ENCODE measurements at regions of chr2 and their contacts with region 1.

Region 1: GRCh38 chr2:233297076-233297475 is 10.5 kb upstream of the SAG start:
- DNase-seq: no peak
- H3K4me3 ChIP-seq: no peak overlapping the region
- H3K4me3 Mint-ChIP-seq: no peak overlapping the region
- H3K27ac ChIP-seq: no peak overlapping the region
- H3K27ac Mint-ChIP-seq: peak overlapping the region in 1 of 8 donors; percentile 58
- H3K4me1 ChIP-seq: no peaks in the 10 kb centered on the region
- H3K4me1 Mint-ChIP-seq: peaks cover 0 to 6% (median 6%) of the 10 kb centered on the region in 3 donors
- H3K27me3 ChIP-seq: no peaks in the 10 kb centered on the region
- H3K27me3 Mint-ChIP-seq: no peaks in the 10 kb centered on the region

Region 2: DNA sequence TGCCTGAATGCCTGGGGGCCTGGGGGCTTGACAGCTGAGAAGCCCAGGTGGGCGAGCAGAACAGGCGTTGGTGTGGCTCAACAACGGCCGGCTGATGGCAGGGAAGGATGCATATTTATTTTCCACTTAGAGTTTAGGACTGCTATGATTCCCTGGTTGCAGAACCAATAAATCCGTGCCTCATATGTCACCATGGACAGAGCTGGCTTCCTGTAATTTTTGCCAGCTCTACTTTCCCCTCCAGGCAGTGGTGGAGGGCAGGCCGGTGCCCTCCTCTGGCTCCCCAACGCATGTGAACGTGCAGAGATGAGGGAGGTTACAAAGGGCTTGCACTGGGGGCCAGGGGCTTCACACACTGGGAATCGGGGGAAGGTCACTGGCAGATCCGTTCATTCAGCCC is 28.7 kb after region 1 on chr2:
- CTCF ChIA-PET with region 1: no interaction called
- POLR2A ChIA-PET with region 1: interaction called, 12 read pairs
- DNase-seq: no peak
- H3K4me3 ChIP-seq: no peak overlapping the region
- H3K4me3 Mint-ChIP-seq: no peak overlapping the region
- H3K27ac ChIP-seq: no peak overlapping the region
- H3K27ac Mint-ChIP-seq: peak overlapping the region in 2 of 8 donors; percentile 29 to 74
- H3K4me1 ChIP-seq: peaks cover 13% of the 10 kb centered on the region
- H3K4me1 Mint-ChIP-seq: peaks cover 20 to 35% (median 22%) of the 10 kb centered on the region in 3 donors
- H3K27me3 ChIP-seq: no peaks in the 10 kb centered on the region
- H3K27me3 Mint-ChIP-seq: no peaks in the 10 kb centered on the region

Measured in CD8-positive, alpha-beta memory T cell (primary cell).